ENCODE measurements at regions of chr4 and their contacts with region 1.

Region 1: DNA sequence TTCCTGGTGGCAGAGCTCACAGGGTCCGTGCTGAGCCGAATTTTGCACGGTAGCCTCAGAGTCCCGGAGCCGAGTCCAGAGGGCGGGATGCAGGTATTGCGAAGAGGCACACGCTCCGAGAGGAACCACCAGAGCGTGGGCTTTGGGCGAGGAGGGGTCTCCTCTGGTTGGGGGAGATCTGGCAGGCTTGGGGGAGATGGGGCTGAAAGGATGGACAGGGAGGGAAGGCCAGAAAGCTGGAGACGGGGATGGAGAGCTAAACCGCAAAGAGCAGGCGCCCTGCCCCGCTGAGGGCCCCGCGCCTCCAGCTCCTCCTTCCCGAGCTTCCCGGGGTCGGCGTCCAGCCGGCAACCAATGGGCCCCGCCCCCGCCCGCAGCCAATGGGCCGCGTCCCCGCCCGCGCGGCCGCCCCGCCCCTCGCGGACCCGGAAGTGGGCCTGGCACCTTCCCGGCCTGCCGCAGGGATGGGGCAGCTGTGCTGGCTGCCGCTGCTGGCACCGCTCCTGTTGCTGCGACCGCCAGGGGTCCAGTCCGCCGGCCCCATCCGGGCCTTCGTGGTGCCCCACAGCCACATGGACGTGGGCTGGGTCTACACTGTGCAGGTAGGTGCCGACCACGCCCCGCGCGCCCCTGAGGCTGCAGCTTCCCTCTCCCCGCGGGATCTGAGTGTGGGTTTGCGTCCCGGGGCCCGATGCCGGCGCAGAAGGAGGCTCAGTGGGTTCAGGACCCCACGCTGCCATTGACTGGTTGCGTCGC is at the start of gene MAN2B2:
- DNase-seq: peak; percentile 86 to 94
- H3K4me3 ChIP-seq: peak within 1 kb of the TSS; percentile 80 to 81
- H3K27ac ChIP-seq: peak within 1 kb of the TSS; percentile 79 to 81
- H3K4me1 ChIP-seq: peaks cover 0 to 29% (median 14%) of the 10 kb centered on the region in 4 donors
- H3K27me3 ChIP-seq: no peaks in the 10 kb centered on the region
- CTCF ChIP-seq: no peak

Region 2: GRCh38 chr4:6269616-6270511 is 305.1 kb before region 1 on chr4 and contains the start of gene WFS1:
- intact Hi-C with region 1: loop called (anchors 10 kb)
- DNase-seq: peak; percentile 97 to 100
- H3K4me3 ChIP-seq: peak within 1 kb of the TSS; percentile 83 to 84
- H3K27ac ChIP-seq: peak within 1 kb of the TSS; percentile 80 to 89
- H3K4me1 ChIP-seq: peaks cover 0 to 53% (median 45%) of the 10 kb centered on the region in 4 donors
- H3K27me3 ChIP-seq: no peaks in the 10 kb centered on the region
- CTCF ChIP-seq: no peak

Region 3: GRCh38 chr4:6673660-6674499 is 99.0 kb after region 1 on chr4:
- intact Hi-C with region 1: loop called (anchors 10 kb)
- DNase-seq: peak; percentile 93 to 98
- H3K4me3 ChIP-seq: peak overlapping the region; percentile 76 to 92
- H3K27ac ChIP-seq: peak overlapping the region; percentile 82 to 90
- H3K4me1 ChIP-seq: peaks cover 0 to 33% (median 29%) of the 10 kb centered on the region in 4 donors
- H3K27me3 ChIP-seq: no peaks in the 10 kb centered on the region
- CTCF ChIP-seq: no peak

Region 4: GRCh38 chr4:7081891-7082471 is 507.1 kb after region 1 on chr4:
- intact Hi-C with region 1: no loop called
- DNase-seq: peak in 1 of 2 donors; percentile 63
- H3K4me3 ChIP-seq: no peak overlapping the region
- H3K27ac ChIP-seq: no peak overlapping the region
- H3K4me1 ChIP-seq: no peaks in the 10 kb centered on the region
- H3K27me3 ChIP-seq: peaks cover 0 to 27% of the 10 kb centered on the region in 2 donors
- CTCF ChIP-seq: no peak

Measured in tibial artery (tissue), 4 donors.